ENCODE measurements at regions of chr2 and their contacts with region 1.

Region 1: DNA sequence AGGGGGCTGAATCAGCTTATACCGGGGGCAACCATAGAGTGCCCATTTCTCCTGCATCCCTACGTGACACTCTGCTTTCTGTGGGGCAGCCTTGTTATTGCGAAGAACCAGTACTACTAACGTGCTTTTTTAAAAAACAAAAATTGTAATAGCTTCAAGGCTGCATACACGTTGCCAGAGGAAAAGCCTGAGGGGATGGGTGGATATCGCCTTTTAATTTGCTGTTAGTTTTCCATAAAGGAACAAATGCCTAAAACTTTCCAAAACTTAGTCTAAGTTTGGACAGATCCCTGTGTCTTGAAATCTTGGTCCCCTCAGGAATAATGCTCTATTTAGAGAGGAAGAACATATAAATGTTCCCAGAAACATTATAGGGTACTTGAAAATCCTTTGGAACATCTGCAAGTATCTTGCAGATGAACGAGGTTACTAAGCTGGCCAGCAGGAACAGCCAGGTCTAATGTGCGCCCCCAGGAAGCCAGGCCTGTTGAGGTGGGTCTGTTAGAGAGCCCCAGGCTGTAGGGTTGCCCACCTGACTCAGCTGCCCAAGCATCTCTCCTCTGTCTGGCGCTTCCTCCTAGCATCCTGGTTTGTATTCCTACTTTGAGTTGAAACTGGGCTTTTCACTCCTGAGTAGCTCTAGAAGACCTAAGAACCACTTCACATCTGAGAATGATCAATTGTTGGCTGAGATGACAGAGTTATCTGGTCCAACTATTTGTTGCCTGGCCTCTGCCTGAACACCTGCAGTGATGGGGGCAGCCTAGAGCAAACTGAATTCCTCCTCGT is 96.9 kb downstream of the TGOLN2 start:
- DNase-seq: no peak
- ATAC-seq: peak in 2 of 4 donors; percentile 25 to 49
- H3K4me3 ChIP-seq: no peak overlapping the region
- H3K27ac ChIP-seq: peak overlapping the region in 4 of 12 donors; percentile 5 to 58 (median 25)
- H3K4me1 ChIP-seq: peaks cover 0 to 29% (median 2%) of the 10 kb centered on the region in 12 donors
- H3K27me3 ChIP-seq: no peaks in the 10 kb centered on the region
- CTCF ChIP-seq: no peak
- POLR2A ChIP-seq: no peak

Region 2: GRCh38 chr2:85199698-85200097 is 31.2 kb before region 1 on chr2:
- intact Hi-C with region 1: loop called in 1 of 10 experiments (anchors 5 kb)
- DNase-seq: no peak
- ATAC-seq: peak in 2 of 4 donors; percentile 36 to 49
- H3K4me3 ChIP-seq: no peak overlapping the region
- H3K27ac ChIP-seq: no peak overlapping the region
- H3K4me1 ChIP-seq: peaks cover 0 to 11% (median 0%) of the 10 kb centered on the region in 12 donors
- H3K27me3 ChIP-seq: no peaks in the 10 kb centered on the region
- CTCF ChIP-seq: no peak
- POLR2A ChIP-seq: no peak

Measured in heart left ventricle (tissue), 16 donors.